ACHN (cell line): ENCODE measurements at regions of chr17 and their contacts with region 1.

Region 1: GRCh38 chr17:49434821-49435670 is 20.4 kb upstream of the PHB1 start:
- DNase-seq: peak; percentile 65

Region 2: DNA sequence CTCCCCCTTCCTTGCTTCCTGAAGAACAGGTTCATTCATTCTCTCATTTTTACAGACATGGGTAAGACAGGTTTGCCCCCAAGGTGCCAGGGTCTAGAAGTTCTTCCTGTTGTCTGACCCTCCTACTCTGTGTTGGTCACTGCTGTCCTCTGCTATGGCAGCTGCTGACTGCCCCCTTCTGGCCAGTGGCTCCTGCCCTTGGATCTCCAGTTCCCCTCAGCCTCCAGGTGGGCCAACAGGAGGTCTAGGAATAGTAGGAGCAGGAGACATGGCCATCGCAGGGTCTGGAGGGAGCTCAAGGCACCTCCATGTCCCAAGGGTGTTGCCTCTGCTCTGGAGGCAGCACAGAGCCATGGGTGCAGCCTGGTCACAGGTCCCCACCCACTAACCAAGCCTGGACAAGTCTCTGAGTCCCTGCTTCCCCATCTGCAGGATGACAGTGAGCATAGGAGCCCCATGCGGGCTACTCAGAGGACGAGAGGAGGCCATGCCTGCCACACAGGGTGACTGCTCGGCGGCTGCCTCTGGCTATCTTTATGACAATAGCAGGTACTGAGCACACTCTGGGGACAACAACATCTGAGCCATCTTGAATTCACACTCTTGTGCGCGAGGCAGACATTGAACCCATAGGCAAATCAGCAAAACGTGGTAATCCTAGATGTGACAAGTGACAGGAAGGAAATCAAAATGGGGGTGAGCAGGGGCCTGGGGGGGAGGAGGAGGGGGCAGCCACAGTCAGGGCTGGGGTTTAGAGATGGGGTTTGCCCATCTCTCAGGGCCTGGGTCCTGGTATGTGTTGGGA is 113.7 kb after region 1 on chr17:
- in situ Hi-C with region 1: loop called (anchors 25 kb)
- DNase-seq: peak; percentile 40